ENCODE measurements at regions of chr2 and their contacts with region 1.

Region 1: GRCh38 chr2:88170472-88170892 is 336 bp downstream of the THNSL2 start:
- DNase-seq: no peak
- H3K4me3 ChIP-seq: peak overlapping the region; percentile 81
- H3K27ac ChIP-seq: no peak overlapping the region
- H3K4me1 ChIP-seq: 0 out of 2 replicates have a peak, but pooled peaks cover 5% of the 10 kb centered on the region
- H3K27me3 ChIP-seq: no peaks in the 10 kb centered on the region; the same call in 1 of the 2 replicates
- CTCF ChIP-seq: no peak

Region 2: GRCh38 chr2:88049622-88050021 is 120.9 kb before region 1 on chr2:
- CTCF ChIA-PET with region 1: no interaction called
- POLR2A ChIA-PET with region 1: interaction called, 10 read pairs
- intact Hi-C with region 1: no loop called
- DNase-seq: no peak
- H3K4me3 ChIP-seq: no peak overlapping the region
- H3K27ac ChIP-seq: no peak overlapping the region
- H3K4me1 ChIP-seq: peaks cover 12% of the 10 kb centered on the region
- H3K27me3 ChIP-seq: no peaks in the 10 kb centered on the region
- CTCF ChIP-seq: no peak

Measured in PC-9 (cell line).